Activated CD4-positive, alpha-beta T cell treated with anti-CD3 and anti-CD28 coated beads for 36 hours (primary cell): ENCODE measurements at regions of chr9 and their contacts with region 1.

Region 1: GRCh38 chr9:133149126-133150107 is 14.3 kb downstream of the GBGT1 start:
- DNase-seq: peak; percentile 92
- ATAC-seq: peak; percentile 68
- H3K4me3 Mint-ChIP-seq: peak overlapping the region; percentile 63
- H3K27ac Mint-ChIP-seq: peak overlapping the region; percentile 67
- H3K4me1 Mint-ChIP-seq: peaks cover 27% of the 10 kb centered on the region
- H3K27me3 Mint-ChIP-seq: no peaks in the 10 kb centered on the region

Region 2: GRCh38 chr9:132973713-132974112 is 175.7 kb before region 1 on chr9:
- CTCF ChIA-PET with region 1: no interaction called
- POLR2A ChIA-PET with region 1: no interaction called
- intact Hi-C with region 1: loop called in 1 of 2 experiments (anchors 5 kb)
- DNase-seq: peak; percentile 51
- ATAC-seq: peak; percentile 64
- H3K4me3 Mint-ChIP-seq: no peak overlapping the region
- H3K27ac Mint-ChIP-seq: no peak overlapping the region
- H3K4me1 Mint-ChIP-seq: peaks cover 4% of the 10 kb centered on the region
- H3K27me3 Mint-ChIP-seq: peaks cover 18% of the 10 kb centered on the region

Region 3: DNA sequence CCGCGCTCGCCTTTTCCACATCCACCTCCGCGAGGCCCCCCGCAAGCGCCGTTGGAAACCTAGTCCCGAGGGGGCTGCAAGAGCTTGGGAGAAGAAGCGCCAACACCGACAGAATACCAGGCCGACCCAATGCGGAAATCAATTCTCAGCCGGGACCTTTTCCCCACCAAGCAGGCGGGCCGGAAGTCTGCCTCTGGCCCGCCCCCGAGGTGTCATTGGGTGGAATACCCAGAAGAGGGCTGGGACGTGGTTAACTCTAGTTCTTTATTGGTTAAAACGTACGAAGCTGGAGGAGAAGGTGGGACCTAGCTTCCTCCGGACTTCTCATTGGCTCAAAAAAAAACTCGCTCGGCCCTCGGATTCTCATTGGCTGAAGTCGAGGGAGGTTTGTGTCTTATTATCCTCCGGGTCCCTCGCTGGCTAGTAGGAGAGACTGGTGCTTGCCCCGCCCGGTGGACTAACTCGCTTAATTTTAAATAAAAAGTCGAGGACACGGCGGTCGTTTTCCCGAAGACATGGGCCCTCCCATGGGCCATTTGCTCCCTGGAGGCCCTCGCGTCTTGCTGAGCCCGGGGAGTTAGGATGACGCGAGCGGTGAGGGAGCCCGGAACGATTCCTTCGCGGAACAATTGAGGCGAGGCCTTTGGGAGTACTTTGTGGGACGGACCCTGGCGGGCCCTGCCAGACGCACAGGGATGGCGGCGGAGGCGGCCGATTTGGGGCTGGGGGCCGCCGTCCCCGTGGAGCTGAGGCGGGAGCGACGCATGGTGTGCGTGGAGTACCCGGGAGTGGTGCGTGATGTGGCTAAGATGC is 118.9 kb before region 1 on chr9 and contains the start of gene GTF3C5:
- CTCF ChIA-PET with region 1: interaction called, 9 read pairs
- POLR2A ChIA-PET with region 1: interaction called, 6 read pairs
- intact Hi-C with region 1: loop called (anchors 1 to 5 kb)
- DNase-seq: peak; percentile 95
- ATAC-seq: peak; percentile 98
- H3K4me3 Mint-ChIP-seq: peak within 1 kb of the TSS; percentile 94
- H3K27ac Mint-ChIP-seq: peak within 1 kb of the TSS; percentile 95
- H3K4me1 Mint-ChIP-seq: peaks cover 41% of the 10 kb centered on the region
- H3K27me3 Mint-ChIP-seq: no peaks in the 10 kb centered on the region
- total RNA-seq, gene GTF3C5: 81.3 to 84.5 TPM

Region 4: GRCh38 chr9:133115448-133116345 is 33.7 kb before region 1 on chr9:
- CTCF ChIA-PET with region 1: interaction called, 139 read pairs
- POLR2A ChIA-PET with region 1: interaction called, 6 read pairs
- intact Hi-C with region 1: loop called (anchors 1 to 2 kb)
- DNase-seq: peak; percentile 89
- ATAC-seq: peak; percentile 94
- H3K4me3 Mint-ChIP-seq: peak overlapping the region; percentile 50
- H3K27ac Mint-ChIP-seq: peak overlapping the region; percentile 84
- H3K4me1 Mint-ChIP-seq: peaks cover 57% of the 10 kb centered on the region
- H3K27me3 Mint-ChIP-seq: no peaks in the 10 kb centered on the region

Region 5: GRCh38 chr9:133133681-133134418 is 15.6 kb before region 1 on chr9:
- CTCF ChIA-PET with region 1: interaction called, 29 read pairs
- POLR2A ChIA-PET with region 1: interaction called, 6 read pairs
- intact Hi-C with region 1: loop called (anchors 1 kb)
- DNase-seq: peak; percentile 95
- ATAC-seq: peak; percentile 84
- H3K4me3 Mint-ChIP-seq: peak overlapping the region; percentile 41
- H3K27ac Mint-ChIP-seq: peak overlapping the region; percentile 98
- H3K4me1 Mint-ChIP-seq: peaks cover 75% of the 10 kb centered on the region
- H3K27me3 Mint-ChIP-seq: no peaks in the 10 kb centered on the region

Region 6: DNA sequence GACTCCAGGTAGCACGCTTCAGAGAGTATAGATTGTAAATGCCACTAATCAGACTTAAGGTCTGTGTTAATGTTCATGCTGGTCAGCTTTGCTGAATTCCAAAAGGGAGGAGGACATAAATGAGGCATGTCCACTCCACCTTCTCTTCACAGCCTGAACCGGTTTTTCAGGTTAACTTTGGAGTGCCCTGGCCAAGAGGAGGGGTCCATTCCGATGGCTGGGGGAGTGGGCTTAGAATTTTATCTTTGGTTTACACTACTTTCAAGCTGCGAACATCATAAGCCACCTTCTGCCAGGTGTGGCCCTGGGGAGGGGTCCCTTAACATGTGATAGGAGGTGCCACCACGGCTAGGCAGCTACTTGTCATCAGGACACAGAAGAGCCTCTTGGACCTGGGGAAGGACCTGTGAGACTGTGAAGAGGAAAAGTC is 101.3 kb after region 1 on chr9:
- CTCF ChIA-PET with region 1: no interaction called
- POLR2A ChIA-PET with region 1: no interaction called
- intact Hi-C with region 1: no loop called
- DNase-seq: no peak
- ATAC-seq: no peak
- H3K4me3 Mint-ChIP-seq: no peak overlapping the region
- H3K27ac Mint-ChIP-seq: no peak overlapping the region
- H3K4me1 Mint-ChIP-seq: no peaks in the 10 kb centered on the region
- H3K27me3 Mint-ChIP-seq: peaks cover 3% of the 10 kb centered on the region